HepG2 (cell line): ENCODE measurements at regions of chr9 and their contacts with region 1.

Region 1: DNA sequence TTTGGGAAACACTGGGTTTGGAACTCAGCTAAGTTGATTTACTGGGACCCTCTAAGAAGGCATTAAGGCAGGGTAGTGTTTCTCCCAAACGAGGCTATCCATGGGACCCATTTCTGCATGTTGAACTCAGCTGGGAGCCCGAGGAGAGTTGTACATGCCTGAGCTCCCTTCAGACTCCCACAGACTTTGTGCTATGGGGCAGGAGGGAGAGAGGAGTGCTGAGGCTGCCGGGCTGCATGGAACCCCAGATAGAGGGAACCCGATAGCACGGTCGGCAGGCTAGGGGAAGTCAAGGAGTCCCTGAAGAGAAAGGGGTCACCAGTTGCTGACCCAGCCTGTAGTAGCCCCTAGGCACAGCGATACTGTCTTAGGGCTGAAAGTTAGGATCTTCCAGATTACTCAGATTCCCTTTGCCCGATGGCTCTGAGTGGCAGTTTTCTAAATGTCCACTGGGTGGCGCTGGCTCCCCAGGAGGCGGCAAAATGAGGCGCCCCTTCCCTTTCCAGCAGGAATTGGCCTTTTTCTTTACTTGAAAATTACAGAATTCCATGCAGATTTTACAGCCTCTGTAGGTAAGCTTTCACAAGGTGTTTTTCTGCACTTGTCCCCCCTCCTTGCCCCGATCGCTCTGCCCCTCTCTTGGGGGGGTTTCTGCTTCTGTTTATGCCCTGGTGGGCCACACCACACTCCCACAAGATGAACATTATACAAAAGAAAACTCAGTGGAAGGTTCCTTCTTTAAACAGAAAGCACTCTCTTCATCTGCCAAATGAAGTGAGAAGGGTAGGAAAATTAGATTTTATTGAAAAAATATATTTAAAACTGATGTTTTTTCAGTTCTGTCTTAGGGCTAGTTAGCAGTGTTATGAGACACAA is 17.8 kb downstream of the NANS start:
- DNase-seq: peak; percentile 36
- ATAC-seq: peak; percentile 73
- H3K4me3 ChIP-seq: no peak overlapping the region
- H3K27ac ChIP-seq: peak overlapping the region; percentile 29
- H3K4me1 ChIP-seq: peaks cover 42% of the 10 kb centered on the region
- H3K27me3 ChIP-seq: no peaks in the 10 kb centered on the region
- CTCF ChIP-seq: peak; percentile 87
- EP300 ChIP-seq: no peak
- POLR2A ChIP-seq: no peak
- RAD21 ChIP-seq: peak; percentile 74

Region 2: DNA sequence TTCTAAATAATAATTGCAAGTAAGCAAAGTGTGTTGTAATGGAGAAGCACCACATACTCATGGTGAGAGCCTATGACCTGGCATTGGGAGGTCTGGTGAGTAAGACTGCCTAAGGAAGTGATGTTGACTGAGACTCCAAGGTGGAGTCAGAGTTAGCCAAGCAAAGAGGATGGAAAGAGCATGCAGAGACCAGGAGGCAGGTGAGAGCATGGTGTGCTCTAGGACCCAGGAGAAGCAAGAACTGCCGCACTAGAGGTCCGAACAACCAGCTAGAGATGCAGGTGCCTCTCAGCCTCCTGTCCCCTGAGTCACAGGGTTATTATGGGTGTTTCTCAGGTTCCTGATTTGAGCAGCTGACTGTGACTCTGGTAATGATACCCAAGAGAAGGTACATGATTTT is 63.9 kb before region 1 on chr9:
- CTCF ChIA-PET with region 1: no interaction called
- POLR2A ChIA-PET with region 1: no interaction called
- in situ Hi-C with region 1: no loop called
- intact Hi-C with region 1: no loop called
- DNase-seq: no peak
- ATAC-seq: peak; percentile 46
- H3K4me3 ChIP-seq: no peak overlapping the region
- H3K27ac ChIP-seq: no peak overlapping the region
- H3K4me1 ChIP-seq: no peaks in the 10 kb centered on the region
- H3K27me3 ChIP-seq: no peaks in the 10 kb centered on the region
- CTCF ChIP-seq: no peak
- EP300 ChIP-seq: no peak
- POLR2A ChIP-seq: no peak
- RAD21 ChIP-seq: no peak

Region 3: DNA sequence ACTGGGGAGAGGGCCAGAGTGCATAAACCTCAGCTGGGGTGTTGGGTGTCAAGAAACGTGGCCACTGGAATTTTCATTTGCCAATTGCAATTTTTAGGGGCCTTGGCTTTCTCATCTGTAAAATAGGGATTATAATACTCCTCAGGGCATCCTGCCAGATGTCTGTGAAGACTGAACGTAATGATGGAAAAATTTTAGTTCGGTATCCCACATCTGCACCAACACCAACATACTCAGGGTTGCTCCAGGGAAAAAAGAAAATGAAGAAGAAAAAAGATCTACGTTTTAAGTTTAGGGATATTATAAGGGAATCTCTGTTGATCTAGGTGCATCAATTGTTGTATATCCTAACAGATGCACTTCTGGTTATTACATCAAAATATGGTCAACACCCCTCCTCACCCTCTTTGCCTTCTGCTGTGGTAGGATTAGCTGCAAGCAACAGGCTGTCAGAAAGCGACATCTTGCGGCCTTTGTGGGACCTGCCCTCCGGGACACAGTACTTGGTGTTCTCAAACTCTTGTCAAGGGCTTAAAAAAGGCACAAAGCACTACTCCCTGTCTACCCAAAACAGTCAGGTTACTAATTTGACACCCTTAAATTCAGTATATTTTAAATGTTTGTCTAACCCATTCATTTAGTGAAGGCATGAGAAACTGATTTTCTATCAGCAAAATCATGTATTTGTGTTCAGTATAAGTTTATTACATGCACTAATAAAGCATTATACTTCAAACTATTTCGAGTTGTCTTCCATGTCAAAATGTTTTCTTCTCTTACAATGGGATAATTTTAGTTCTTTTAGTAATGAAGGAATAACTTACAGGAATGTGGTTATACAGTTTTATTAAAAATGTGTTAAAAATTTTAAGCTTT is 189.4 kb after region 1 on chr9:
- CTCF ChIA-PET with region 1: interaction called, 14 read pairs
- POLR2A ChIA-PET with region 1: no interaction called
- in situ Hi-C with region 1: no loop called
- intact Hi-C with region 1: loop called (anchors 1 kb)
- DNase-seq: peak; percentile 61
- ATAC-seq: peak; percentile 100
- H3K4me3 ChIP-seq: no peak overlapping the region
- H3K27ac ChIP-seq: no peak overlapping the region
- H3K4me1 ChIP-seq: peaks cover 18% of the 10 kb centered on the region
- H3K27me3 ChIP-seq: peaks cover 0 to under 1% of the 10 kb centered on the region in 2 experiments; a peak in 1 of 5 replicates
- CTCF ChIP-seq: peak; percentile 95
- EP300 ChIP-seq: no peak
- POLR2A ChIP-seq: no peak
- RAD21 ChIP-seq: peak; percentile 88